ENCODE measurements at regions of chr2 and their contacts with region 1.

Region 1: GRCh38 chr2:86274918-86275275 is 62.5 kb downstream of the REEP1 start:
- DNase-seq: peak; percentile 60
- ATAC-seq: peak; percentile 90
- H3K4me3 ChIP-seq: no peak overlapping the region
- H3K27ac ChIP-seq: peak overlapping the region; percentile 58
- H3K4me1 ChIP-seq: peaks cover 28% of the 10 kb centered on the region
- H3K27me3 ChIP-seq: no peaks in the 10 kb centered on the region
- CTCF ChIP-seq: no peak
- EP300 ChIP-seq: peak in 1 of 2 experiments; percentile 55; a peak in 2 of 4 replicates
- POLR2A ChIP-seq: no peak
- RAD21 ChIP-seq: no peak

Region 2: GRCh38 chr2:86243950-86244733 is 30.8 kb before region 1 on chr2:
- CTCF ChIA-PET with region 1: interaction called, 8 read pairs
- POLR2A ChIA-PET with region 1: no interaction called
- RAD21 ChIA-PET with region 1: interaction called, 14 read pairs
- SMC1A ChIA-PET with region 1: interaction called, 11 read pairs
- in situ Hi-C with region 1: no loop called
- intact Hi-C with region 1: no loop called
- DNase-seq: no peak
- ATAC-seq: peak; percentile 84
- H3K4me3 ChIP-seq: no peak overlapping the region
- H3K27ac ChIP-seq: peak overlapping the region; percentile 64
- H3K4me1 ChIP-seq: peaks cover 20% of the 10 kb centered on the region
- H3K27me3 ChIP-seq: no peaks in the 10 kb centered on the region
- CTCF ChIP-seq: peak in 1 of 3 experiments; percentile 42; a peak in 2 of 6 replicates
- EP300 ChIP-seq: no peak
- POLR2A ChIP-seq: no peak
- RAD21 ChIP-seq: 0 out of 2 replicates have a peak, but pooled peaks have one; percentile 28

Region 3: GRCh38 chr2:86290596-86291327 is 15.9 kb after region 1 on chr2:
- CTCF ChIA-PET with region 1: interaction called, 6 read pairs
- POLR2A ChIA-PET with region 1: no interaction called
- RAD21 ChIA-PET with region 1: interaction called, 4 read pairs
- SMC1A ChIA-PET with region 1: interaction called, 15 read pairs
- in situ Hi-C with region 1: no loop called
- intact Hi-C with region 1: no loop called
- DNase-seq: no peak
- ATAC-seq: no peak
- H3K4me3 ChIP-seq: no peak overlapping the region
- H3K27ac ChIP-seq: no peak overlapping the region
- H3K4me1 ChIP-seq: no peaks in the 10 kb centered on the region
- H3K27me3 ChIP-seq: no peaks in the 10 kb centered on the region; a peak in 1 of 4 replicates
- CTCF ChIP-seq: no peak
- EP300 ChIP-seq: no peak
- POLR2A ChIP-seq: no peak
- RAD21 ChIP-seq: no peak

Measured in GM12878 (cell line).